Prostate gland (tissue), 2 donors: ENCODE measurements at regions of chr10 and their contacts with region 1.

Region 1: GRCh38 chr10:97334370-97335175 is at the start of gene FRAT2:
- DNase-seq: peak; percentile 89
- H3K4me3 ChIP-seq: peak within 1 kb of the TSS; percentile 82 to 83
- H3K27ac ChIP-seq: peak within 1 kb of the TSS; percentile 93 to 96
- H3K4me1 ChIP-seq: peaks cover 11% of the 10 kb centered on the region
- H3K27me3 ChIP-seq: no peaks in the 10 kb centered on the region
- CTCF ChIP-seq: peak in 2 of 4 experiments; percentile 16 to 37
- POLR2A ChIP-seq: peak; percentile 95
- total RNA-seq, gene FRAT2: 43.0 to 45.3 TPM

Region 2: DNA sequence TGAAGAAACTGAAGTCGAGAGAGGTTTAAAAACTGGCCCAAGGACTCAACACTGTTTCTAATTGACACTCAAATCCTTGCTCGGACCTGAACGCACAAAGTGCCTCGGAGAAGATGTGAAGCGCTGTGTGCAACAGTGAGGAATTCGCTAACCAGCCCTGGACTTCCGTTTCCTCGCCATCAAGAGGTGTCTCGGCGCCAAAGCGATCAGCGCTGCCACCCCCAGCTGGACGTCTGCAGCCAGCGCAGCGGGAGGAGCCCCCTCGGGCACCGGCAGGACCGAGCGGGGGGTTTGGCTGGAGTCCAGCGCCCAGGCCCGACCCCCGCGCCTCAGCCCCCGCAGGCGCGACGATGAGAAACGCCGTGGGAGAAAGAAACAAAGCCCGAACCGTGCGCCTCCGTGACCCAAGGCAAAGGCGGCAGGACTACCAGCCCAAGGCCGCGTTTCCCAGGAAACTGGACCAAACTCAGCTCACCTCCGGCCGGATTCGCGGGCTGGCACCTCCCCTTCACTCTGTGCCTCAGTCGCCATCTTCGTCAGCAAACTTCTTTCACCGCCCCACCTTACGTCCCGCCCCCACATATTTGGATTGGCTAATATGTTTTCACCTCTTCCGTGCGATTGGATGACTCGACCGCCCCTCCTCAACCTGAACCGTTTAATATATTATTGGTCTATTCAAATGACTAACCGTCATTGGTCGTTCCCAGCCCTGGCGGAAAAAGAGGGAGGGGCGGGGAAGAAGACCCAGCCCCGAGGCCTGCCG is 42.3 kb before region 1 on chr10 and contains the start of gene ARHGAP19:
- intact Hi-C with region 1: loop called (anchors 5 kb)
- DNase-seq: peak; percentile 97
- H3K4me3 ChIP-seq: peak within 1 kb of the TSS; percentile 64 to 79
- H3K27ac ChIP-seq: peak within 1 kb of the TSS; percentile 92 to 96
- H3K4me1 ChIP-seq: peaks cover 5% of the 10 kb centered on the region
- H3K27me3 ChIP-seq: no peaks in the 10 kb centered on the region
- CTCF ChIP-seq: peak in 1 of 4 experiments; percentile 38
- POLR2A ChIP-seq: peak; percentile 92
- total RNA-seq, gene ARHGAP19: 10.4 to 37.1 TPM

Region 3: DNA sequence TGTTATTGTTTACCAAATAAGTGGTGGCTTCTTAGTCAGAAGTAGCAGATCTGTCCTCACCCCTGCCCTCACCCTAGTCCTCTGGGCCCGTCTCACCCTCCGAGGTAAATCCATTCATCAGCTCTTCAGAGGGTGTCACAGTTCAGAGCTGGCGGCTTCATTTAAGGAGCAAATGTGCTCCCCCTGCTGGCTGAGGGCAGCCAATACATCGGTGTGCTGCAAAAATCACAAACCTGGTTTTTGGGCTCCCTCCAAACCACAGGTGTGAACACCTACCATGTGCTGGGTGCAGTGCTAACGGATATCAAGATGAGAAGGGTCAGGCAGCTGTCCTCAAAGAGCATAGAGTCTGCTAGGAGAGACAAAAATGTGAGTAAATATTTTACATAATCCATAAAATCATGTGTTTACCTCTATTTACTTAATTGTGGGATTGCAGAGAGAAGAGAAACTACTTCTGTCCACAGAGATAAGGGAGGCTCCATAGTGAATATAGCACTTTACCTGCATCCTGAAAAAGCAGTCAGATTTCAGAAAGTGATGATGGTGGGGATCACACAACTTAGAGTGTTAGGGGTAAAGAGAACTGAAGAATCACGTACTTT is 711.3 kb after region 1 on chr10:
- intact Hi-C with region 1: no loop called
- DNase-seq: peak; percentile 31
- H3K4me3 ChIP-seq: no peak overlapping the region
- H3K27ac ChIP-seq: no peak overlapping the region
- H3K4me1 ChIP-seq: no peaks in the 10 kb centered on the region
- H3K27me3 ChIP-seq: no peaks in the 10 kb centered on the region
- CTCF ChIP-seq: peak; percentile 46 to 76 (median 68)
- POLR2A ChIP-seq: no peak